PC-9 (cell line): ENCODE measurements at regions of chr12 and their contacts with region 1.

Region 1: GRCh38 chr12:6195665-6196535 is 4.3 kb upstream of the CD9 start:
- DNase-seq: peak; percentile 91 to 96
- H3K4me3 ChIP-seq: no peak overlapping the region
- H3K27ac ChIP-seq: peak overlapping the region; percentile 86
- H3K4me1 ChIP-seq: peaks cover 43% of the 10 kb centered on the region
- H3K27me3 ChIP-seq: no peaks in the 10 kb centered on the region
- CTCF ChIP-seq: peak; percentile 96

Region 2: DNA sequence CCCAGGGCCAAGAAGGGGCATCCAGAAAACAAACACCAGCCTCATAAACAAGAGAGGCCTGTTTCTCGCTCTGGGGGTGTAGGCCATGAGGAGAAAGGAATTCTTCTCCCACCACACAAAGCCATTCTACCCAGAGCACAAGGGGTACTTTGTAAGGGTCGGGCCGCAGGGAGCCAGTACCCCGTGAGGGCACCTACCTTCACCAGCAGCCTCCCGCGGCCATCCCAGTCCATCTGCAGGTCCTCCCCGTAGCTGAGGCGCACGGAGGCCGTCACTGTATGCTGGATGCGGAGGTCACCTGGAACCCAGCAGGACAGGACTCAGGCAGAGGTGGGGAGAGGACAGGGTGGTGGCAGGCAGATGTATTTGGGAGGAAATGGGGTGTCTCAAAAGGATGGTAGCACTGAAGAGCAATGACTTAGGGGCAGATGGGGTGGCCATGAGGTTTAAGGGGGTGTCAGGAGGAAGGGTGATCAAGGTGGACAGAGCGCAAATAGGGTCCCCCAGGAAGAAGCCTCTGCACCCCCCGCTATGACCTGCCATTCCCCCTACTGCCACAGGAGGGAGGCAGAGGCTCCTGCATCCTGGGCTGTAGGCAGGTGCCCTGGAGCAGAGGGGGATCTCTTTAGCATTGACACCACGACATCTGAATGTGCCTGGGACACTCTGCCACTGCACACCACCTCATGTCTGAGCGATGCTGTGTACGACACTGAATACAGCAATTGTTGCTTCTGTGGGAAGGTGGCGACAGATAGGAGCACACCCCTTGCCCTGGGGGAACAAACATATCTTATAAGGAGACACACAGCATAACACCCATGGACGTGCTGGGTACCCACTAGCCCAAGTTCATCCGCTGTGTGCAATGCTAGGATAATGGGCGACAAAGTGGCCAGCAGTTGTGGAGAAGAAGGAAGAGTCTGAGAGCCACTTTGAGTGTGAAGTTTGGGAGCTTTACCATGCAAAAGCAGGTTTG is 132.9 kb before region 1 on chr12:
- CTCF ChIA-PET with region 1: interaction called, 9 read pairs
- POLR2A ChIA-PET with region 1: interaction called, 4 read pairs
- intact Hi-C with region 1: loop called (anchors 1 kb)
- DNase-seq: peak; percentile 48 to 80
- H3K4me3 ChIP-seq: no peak overlapping the region
- H3K27ac ChIP-seq: no peak overlapping the region
- H3K4me1 ChIP-seq: peaks cover 34% of the 10 kb centered on the region
- H3K27me3 ChIP-seq: no peaks in the 10 kb centered on the region
- CTCF ChIP-seq: peak; percentile 98

Region 3: GRCh38 chr12:6084261-6084968 is 111.5 kb before region 1 on chr12:
- CTCF ChIA-PET with region 1: interaction called, 4 read pairs
- POLR2A ChIA-PET with region 1: interaction called, 10 read pairs
- intact Hi-C with region 1: loop called (anchors 2 kb)
- DNase-seq: peak; percentile 85 to 87
- H3K4me3 ChIP-seq: no peak overlapping the region
- H3K27ac ChIP-seq: peak overlapping the region; percentile 86
- H3K4me1 ChIP-seq: peaks cover 68% of the 10 kb centered on the region
- H3K27me3 ChIP-seq: no peaks in the 10 kb centered on the region
- CTCF ChIP-seq: no peak

Region 4: GRCh38 chr12:6230321-6231110 is 34.6 kb after region 1 on chr12:
- CTCF ChIA-PET with region 1: interaction called, 5 read pairs
- POLR2A ChIA-PET with region 1: interaction called, 38 read pairs
- intact Hi-C with region 1: loop called (anchors 1 kb)
- DNase-seq: no peak
- H3K4me3 ChIP-seq: no peak overlapping the region
- H3K27ac ChIP-seq: peak overlapping the region; percentile 86
- H3K4me1 ChIP-seq: peaks cover 81% of the 10 kb centered on the region
- H3K27me3 ChIP-seq: no peaks in the 10 kb centered on the region
- CTCF ChIP-seq: no peak

Region 5: DNA sequence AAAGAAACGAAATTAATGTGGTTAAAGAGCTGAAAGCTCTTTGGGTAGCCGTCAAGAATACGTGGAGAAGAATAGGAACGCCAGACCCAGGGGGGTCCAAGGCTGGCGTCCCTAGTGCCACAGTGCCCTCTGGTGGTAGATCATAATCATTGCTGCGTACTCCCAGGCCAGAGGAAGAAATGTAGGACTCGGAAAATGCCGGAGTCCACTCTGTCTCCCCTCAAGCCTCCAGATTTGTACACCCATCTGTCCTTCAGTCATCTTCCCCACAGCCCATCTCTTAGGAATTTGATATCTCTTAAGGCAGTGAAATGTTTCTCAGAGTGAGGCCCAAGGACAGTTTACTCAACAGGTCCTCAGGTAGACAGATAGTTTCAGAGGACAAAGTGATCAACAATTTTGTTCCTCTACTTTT is 89.2 kb after region 1 on chr12:
- CTCF ChIA-PET with region 1: interaction called, 24 read pairs
- POLR2A ChIA-PET with region 1: interaction called, 7 read pairs
- intact Hi-C with region 1: loop called (anchors 1 kb)
- DNase-seq: peak; percentile 48 to 79
- H3K4me3 ChIP-seq: no peak overlapping the region
- H3K27ac ChIP-seq: no peak overlapping the region
- H3K4me1 ChIP-seq: peaks cover 40% of the 10 kb centered on the region
- H3K27me3 ChIP-seq: no peaks in the 10 kb centered on the region
- CTCF ChIP-seq: peak; percentile 99

Region 6: GRCh38 chr12:6312529-6313325 is 116.8 kb after region 1 on chr12:
- CTCF ChIA-PET with region 1: interaction called, 4 read pairs
- POLR2A ChIA-PET with region 1: interaction called, 17 read pairs
- intact Hi-C with region 1: loop called (anchors 1 kb)
- DNase-seq: peak; percentile 96
- H3K4me3 ChIP-seq: peak overlapping the region; percentile 33; the same call in 1 of the 2 replicates
- H3K27ac ChIP-seq: peak overlapping the region; percentile 97
- H3K4me1 ChIP-seq: peaks cover 54% of the 10 kb centered on the region
- H3K27me3 ChIP-seq: no peaks in the 10 kb centered on the region
- CTCF ChIP-seq: no peak